ENCODE measurements at regions of chr9 and their contacts with region 1.

Region 1: GRCh38 chr9:84945878-84946538 is 276.5 kb downstream of the NTRK2 start:
- DNase-seq: no peak
- H3K4me3 ChIP-seq: no peak overlapping the region
- H3K27ac ChIP-seq: no peak overlapping the region
- H3K4me1 ChIP-seq: no peaks in the 10 kb centered on the region
- H3K27me3 ChIP-seq: no peaks in the 10 kb centered on the region
- CTCF ChIP-seq: no peak

Region 2: DNA sequence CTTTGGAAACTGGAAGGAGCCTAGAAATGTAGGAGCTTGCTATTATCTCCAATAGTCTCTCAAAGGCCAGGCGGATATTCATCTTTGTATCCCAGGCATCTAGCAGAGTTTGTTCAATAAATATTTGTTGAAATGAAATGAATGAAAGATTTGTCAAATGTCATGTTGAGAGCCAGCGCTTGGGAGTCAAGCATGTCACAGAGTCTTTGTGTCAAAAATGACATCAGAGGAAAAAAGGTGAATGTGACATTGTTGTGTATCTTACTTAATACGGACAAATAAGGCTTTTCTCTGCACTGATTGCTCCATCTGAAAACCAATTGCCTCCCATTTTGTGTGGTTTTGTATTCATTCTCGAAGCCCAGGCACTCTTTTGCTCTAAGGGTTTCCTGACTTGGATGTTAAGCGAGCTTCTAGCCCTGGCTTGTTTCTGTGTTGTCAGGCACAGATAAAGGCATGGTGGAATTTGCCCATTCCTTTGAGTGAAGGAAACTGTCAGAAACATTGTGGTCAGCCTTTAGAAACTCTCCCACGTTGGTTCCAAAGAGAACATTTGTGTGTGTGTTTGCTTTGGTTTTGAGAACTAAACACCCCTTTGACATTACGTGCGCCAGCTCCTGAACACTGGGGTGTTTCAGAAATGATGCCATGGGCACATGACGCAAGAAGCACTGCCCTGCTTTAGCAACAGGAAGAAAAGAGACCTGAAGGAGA is 44.3 kb after region 1 on chr9:
- CTCF ChIA-PET with region 1: no interaction called
- POLR2A ChIA-PET with region 1: no interaction called
- intact Hi-C with region 1: loop called (anchors 2 kb)
- DNase-seq: no peak
- H3K4me3 ChIP-seq: no peak overlapping the region
- H3K27ac ChIP-seq: no peak overlapping the region
- H3K4me1 ChIP-seq: no peaks in the 10 kb centered on the region
- H3K27me3 ChIP-seq: peaks cover 32% of the 10 kb centered on the region
- CTCF ChIP-seq: no peak

Region 3: DNA sequence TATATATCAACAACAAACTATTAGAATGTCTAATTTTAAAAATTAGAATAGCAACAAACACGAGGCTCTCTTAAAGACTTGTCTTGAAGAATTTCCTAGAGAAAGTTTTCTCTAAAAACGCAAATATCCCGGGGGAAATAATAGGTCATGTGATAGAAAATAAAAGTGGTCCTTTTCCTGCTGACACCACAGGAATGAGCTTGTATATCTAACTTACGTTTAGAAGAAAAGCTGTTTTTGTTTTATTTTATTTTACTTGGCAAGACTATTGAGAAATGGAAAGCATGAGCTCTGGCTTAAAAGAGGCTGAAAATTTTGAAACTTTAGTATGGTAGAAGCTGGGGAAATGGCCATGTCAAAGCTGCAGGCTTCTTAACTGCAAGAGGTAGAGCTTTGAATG is 330.7 kb after region 1 on chr9:
- CTCF ChIA-PET with region 1: no interaction called
- POLR2A ChIA-PET with region 1: no interaction called
- intact Hi-C with region 1: no loop called
- DNase-seq: no peak
- H3K4me3 ChIP-seq: no peak overlapping the region
- H3K27ac ChIP-seq: no peak overlapping the region
- H3K4me1 ChIP-seq: no peaks in the 10 kb centered on the region
- H3K27me3 ChIP-seq: peaks cover 20% of the 10 kb centered on the region
- CTCF ChIP-seq: no peak